ENCODE measurements at regions of chr16 and their contacts with region 1.

Region 1: GRCh38 chr16:89893642-89894509 is 20.5 kb downstream of the TCF25 start:
- DNase-seq: no peak
- H3K4me3 ChIP-seq: no peak overlapping the region
- H3K27ac ChIP-seq: no peak overlapping the region
- H3K4me1 ChIP-seq: no peaks in the 10 kb centered on the region
- H3K27me3 ChIP-seq: no peaks in the 10 kb centered on the region
- CTCF ChIP-seq: no peak
- EP300 ChIP-seq: no peak
- RAD21 ChIP-seq: no peak

Region 2: DNA sequence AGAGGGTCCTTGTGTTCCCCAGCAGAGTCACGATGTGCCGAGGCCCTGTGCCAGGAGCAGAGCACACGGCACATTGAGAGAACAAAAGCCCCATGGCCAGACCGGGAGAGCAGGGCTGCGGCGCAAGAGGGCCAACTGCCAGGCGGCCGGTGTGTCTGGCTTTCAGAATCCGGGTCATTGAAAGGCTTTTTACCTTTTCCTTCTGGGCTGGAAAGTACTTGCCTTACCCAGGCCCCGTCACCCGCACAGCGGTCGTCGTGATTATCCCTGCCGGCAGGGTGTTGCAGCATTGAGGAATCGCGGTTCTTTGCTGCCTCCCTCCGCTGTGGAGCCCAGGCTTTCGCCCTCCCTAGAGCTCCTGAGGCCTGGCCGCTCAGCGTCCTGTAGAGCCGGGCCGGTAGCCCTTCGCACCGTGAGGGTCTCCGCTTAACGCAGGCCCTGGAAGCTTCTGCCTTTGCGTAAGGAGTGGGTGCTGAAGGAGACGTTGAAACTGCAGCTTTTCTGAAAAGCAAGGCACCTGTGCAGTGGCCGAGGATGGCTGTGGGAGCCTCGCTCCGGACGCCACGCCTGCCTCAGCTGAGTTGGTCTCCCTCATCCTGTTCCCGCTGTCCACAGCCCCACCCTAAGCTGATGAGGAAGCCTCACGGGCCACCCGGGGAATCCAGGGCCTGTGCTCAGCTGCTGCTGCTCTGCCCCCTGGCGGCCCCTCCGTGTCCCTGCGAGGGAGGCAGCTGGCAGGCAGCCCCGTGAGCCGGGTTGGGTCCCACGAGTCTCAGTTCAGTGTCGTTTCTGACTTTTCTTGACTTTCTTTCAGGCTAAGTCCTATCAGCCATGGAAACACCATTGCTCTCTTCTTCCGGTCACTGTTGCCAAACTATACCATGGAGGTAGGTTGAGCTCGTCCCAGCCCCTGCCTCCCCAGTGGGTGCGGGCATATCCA is 16.2 kb after region 1 on chr16:
- CTCF ChIA-PET with region 1: interaction called, 14 read pairs
- POLR2A ChIA-PET with region 1: interaction called, 3 read pairs
- DNase-seq: peak; percentile 92
- H3K4me3 ChIP-seq: peak overlapping the region in 1 of 2 experiments; percentile 42; a peak in 1 of 4 replicates
- H3K27ac ChIP-seq: no peak overlapping the region; a peak in 1 of 4 replicates
- H3K4me1 ChIP-seq: peaks cover 0 to 3% of the 10 kb centered on the region in 2 experiments; a peak in 1 of 4 replicates
- H3K27me3 ChIP-seq: no peaks in the 10 kb centered on the region
- CTCF ChIP-seq: peak; percentile 86
- EP300 ChIP-seq: no peak
- RAD21 ChIP-seq: peak; percentile 59

Region 3: DNA sequence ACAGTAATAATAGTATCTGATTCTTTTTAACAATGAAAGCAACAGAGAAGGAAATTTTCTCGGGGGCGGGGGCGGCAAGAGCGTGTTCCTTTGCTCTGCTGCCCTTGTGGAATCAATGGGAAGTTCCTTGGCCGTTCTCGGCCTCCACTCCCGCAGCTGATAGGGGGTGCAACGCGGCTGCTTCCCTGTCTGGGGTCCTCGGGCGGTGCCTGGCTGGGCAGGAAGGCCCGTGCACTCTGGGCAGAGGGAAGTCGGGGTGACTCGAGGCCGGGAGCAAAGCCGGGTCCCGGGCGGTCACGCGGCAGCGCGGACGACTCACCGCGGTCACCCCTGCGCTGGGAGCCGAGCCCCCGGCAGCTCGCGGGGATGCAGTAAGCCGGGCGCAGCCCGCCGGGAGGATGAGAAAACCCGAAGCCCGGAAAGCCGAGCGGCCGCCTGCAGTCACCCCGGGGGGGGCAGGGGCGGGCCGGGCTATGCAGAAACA is 31.8 kb after region 1 on chr16:
- CTCF ChIA-PET with region 1: no interaction called
- POLR2A ChIA-PET with region 1: no interaction called
- DNase-seq: peak; percentile 57
- H3K4me3 ChIP-seq: peak overlapping the region; percentile 83 to 89
- H3K27ac ChIP-seq: peak overlapping the region; percentile 36 to 45; a peak in 3 of 4 replicates
- H3K4me1 ChIP-seq: peaks cover 8 to 18% of the 10 kb centered on the region in 2 experiments; a peak in 3 of 4 replicates
- H3K27me3 ChIP-seq: no peaks in the 10 kb centered on the region
- CTCF ChIP-seq: no peak; the same call in 1 of the 2 replicates
- EP300 ChIP-seq: no peak
- RAD21 ChIP-seq: no peak

Region 4: GRCh38 chr16:89958068-89958467 is 64.2 kb after region 1 on chr16:
- CTCF ChIA-PET with region 1: no interaction called
- POLR2A ChIA-PET with region 1: no interaction called
- DNase-seq: peak; percentile 93
- H3K4me3 ChIP-seq: no peak overlapping the region
- H3K27ac ChIP-seq: no peak overlapping the region
- H3K4me1 ChIP-seq: peaks cover 0 to 6% of the 10 kb centered on the region in 2 experiments; a peak in 1 of 4 replicates
- H3K27me3 ChIP-seq: no peaks in the 10 kb centered on the region
- CTCF ChIP-seq: no peak
- EP300 ChIP-seq: no peak
- RAD21 ChIP-seq: no peak

Region 5: DNA sequence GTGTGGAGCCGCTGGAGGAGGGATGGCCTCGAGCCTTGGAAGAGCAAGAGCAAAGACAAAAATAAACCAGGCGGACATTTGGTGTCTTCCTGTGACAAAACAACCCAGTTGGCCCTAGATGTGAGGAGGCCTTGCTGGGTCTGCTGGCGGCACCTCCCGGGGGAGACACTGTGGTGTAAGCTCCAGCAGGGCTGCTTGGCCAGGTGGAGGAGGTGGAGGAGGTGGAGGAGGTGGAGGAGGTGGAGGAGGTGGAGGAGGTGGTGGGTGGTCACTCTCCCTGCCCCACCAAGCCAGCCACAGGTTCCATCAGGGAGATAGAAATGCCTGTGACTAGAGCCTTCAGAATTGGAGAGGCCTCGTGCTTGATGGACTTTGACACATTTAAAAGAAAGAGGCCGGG is 93.3 kb after region 1 on chr16:
- CTCF ChIA-PET with region 1: no interaction called
- POLR2A ChIA-PET with region 1: no interaction called
- DNase-seq: no peak
- H3K4me3 ChIP-seq: no peak overlapping the region
- H3K27ac ChIP-seq: no peak overlapping the region
- H3K4me1 ChIP-seq: no peaks in the 10 kb centered on the region
- H3K27me3 ChIP-seq: no peaks in the 10 kb centered on the region
- CTCF ChIP-seq: no peak
- EP300 ChIP-seq: no peak
- RAD21 ChIP-seq: no peak

Measured in SK-N-SH (cell line).